ENCODE measurements at regions of chr3 and their contacts with region 1.

Region 1: GRCh38 chr3:158434412-158435038 is 136.5 kb upstream of the MLF1 start:
- DNase-seq: peak; percentile 79
- H3K4me3 Mint-ChIP-seq: no peak overlapping the region
- H3K27ac Mint-ChIP-seq: no peak overlapping the region
- H3K4me1 Mint-ChIP-seq: no peaks in the 10 kb centered on the region
- H3K27me3 Mint-ChIP-seq: no peaks in the 10 kb centered on the region
- CTCF ChIP-seq: peak; percentile 69

Region 2: GRCh38 chr3:157606011-157606851 is 828.3 kb before region 1 on chr3:
- CTCF ChIA-PET with region 1: interaction called, 69 read pairs
- POLR2A ChIA-PET with region 1: no interaction called
- intact Hi-C with region 1: loop called (anchors 1 kb)
- DNase-seq: peak; percentile 65
- H3K4me3 Mint-ChIP-seq: no peak overlapping the region
- H3K27ac Mint-ChIP-seq: no peak overlapping the region
- H3K4me1 Mint-ChIP-seq: no peaks in the 10 kb centered on the region
- H3K27me3 Mint-ChIP-seq: no peaks in the 10 kb centered on the region
- CTCF ChIP-seq: peak; percentile 83

Region 3: DNA sequence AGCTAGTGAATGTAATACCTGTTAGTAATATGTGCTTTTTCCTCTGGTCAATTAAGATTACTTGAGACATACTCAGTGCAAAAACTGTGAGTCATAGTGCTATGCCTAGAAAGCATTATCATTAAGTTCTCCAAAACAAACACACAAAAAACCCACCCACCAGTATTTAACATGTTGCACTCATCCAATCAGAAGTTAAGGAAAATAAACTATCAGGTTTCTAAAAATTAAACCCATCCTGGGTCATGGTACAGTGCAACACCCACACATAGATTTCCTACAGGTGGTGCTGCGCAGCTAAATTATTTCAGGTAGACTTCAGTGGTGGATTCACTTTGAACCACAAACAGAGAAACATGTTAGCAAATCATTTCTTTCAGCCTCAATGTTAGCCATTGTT is 666.9 kb before region 1 on chr3:
- CTCF ChIA-PET with region 1: interaction called, 5 read pairs
- POLR2A ChIA-PET with region 1: no interaction called
- intact Hi-C with region 1: loop called (anchors 10 kb)
- DNase-seq: peak; percentile 39
- H3K4me3 Mint-ChIP-seq: no peak overlapping the region
- H3K27ac Mint-ChIP-seq: no peak overlapping the region
- H3K4me1 Mint-ChIP-seq: no peaks in the 10 kb centered on the region
- H3K27me3 Mint-ChIP-seq: no peaks in the 10 kb centered on the region
- CTCF ChIP-seq: no peak

Region 4: GRCh38 chr3:158109804-158110657 is 324.5 kb before region 1 on chr3 and contains the start of gene RSRC1:
- CTCF ChIA-PET with region 1: interaction called, 3 read pairs
- POLR2A ChIA-PET with region 1: no interaction called
- intact Hi-C with region 1: loop called (anchors 5 kb)
- DNase-seq: peak; percentile 91
- H3K4me3 Mint-ChIP-seq: peak within 1 kb of the TSS; percentile 86
- H3K27ac Mint-ChIP-seq: peak within 1 kb of the TSS; percentile 97
- H3K4me1 Mint-ChIP-seq: peaks cover 29% of the 10 kb centered on the region
- H3K27me3 Mint-ChIP-seq: no peaks in the 10 kb centered on the region
- CTCF ChIP-seq: no peak
- total RNA-seq, gene RSRC1: 32.3 and 35.8 TPM in 2 replicates

Region 5: DNA sequence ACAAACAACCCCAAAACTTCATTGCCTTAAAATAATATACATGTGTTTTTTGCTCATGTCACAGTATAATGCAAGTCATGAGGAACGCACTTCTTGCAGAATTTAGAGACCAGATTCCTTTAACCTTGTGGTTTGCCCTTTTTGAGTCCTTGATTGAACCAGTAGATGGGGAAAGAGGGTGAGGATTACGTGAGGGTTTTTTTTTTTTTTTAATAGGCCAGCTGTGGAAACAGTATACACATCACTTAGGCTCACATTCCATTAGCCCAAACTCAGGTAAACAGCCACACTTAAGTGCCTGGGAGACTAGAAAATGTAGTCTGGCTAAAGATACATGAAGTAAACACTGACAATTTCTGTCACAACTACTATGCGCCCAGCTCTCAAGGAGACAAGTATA is 21.6 kb after region 1 on chr3:
- CTCF ChIA-PET with region 1: no interaction called
- POLR2A ChIA-PET with region 1: no interaction called
- intact Hi-C with region 1: no loop called
- DNase-seq: no peak
- H3K4me3 Mint-ChIP-seq: no peak overlapping the region
- H3K27ac Mint-ChIP-seq: no peak overlapping the region
- H3K4me1 Mint-ChIP-seq: peaks cover 6% of the 10 kb centered on the region
- H3K27me3 Mint-ChIP-seq: no peaks in the 10 kb centered on the region
- CTCF ChIP-seq: no peak

Region 6: DNA sequence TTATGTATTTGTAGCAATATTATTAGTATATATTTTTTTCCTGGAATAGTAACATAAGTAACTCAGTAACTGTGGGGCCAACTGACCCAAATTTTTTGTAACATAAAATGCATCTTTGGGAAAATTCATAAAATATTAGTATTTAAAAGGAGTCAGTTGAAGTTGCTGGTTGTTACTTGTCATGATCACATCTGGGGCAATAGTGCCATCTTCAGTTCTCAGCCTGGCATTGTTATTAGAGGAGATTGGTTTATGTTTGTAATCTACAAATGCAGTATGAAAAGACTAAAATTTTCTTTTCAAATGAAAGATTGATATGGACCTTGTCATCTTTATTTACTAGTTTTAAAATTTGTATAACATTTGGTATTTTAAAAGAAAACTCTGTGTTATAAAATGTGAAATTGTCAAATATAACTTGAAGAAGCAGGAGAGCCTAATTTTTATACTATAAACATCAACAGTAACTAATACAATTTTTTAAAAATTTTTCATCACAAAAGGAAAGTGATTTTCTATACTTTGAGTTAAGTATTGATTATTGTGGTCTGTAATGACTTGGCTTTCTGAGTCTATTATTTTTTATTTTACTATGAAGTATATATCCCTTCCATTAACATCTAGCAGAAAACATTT is 97.7 kb after region 1 on chr3:
- CTCF ChIA-PET with region 1: interaction called, 9 read pairs
- POLR2A ChIA-PET with region 1: interaction called, 4 read pairs
- intact Hi-C with region 1: loop called (anchors 5 kb)
- DNase-seq: peak; percentile 77
- H3K4me3 Mint-ChIP-seq: no peak overlapping the region
- H3K27ac Mint-ChIP-seq: no peak overlapping the region
- H3K4me1 Mint-ChIP-seq: peaks cover 7% of the 10 kb centered on the region
- H3K27me3 Mint-ChIP-seq: no peaks in the 10 kb centered on the region
- CTCF ChIP-seq: peak; percentile 64

Measured in MCF 10A (cell line).